ENCODE measurements at regions of chr9 and their contacts with region 1.

Region 1: GRCh38 chr9:21317956-21318923 is 13.1 kb upstream of the IFNA5 start:
- DNase-seq: peak in 1 of 2 experiments; percentile 17
- H3K4me3 ChIP-seq: no peak overlapping the region
- H3K27ac ChIP-seq: no peak overlapping the region
- H3K4me1 ChIP-seq: no peaks in the 10 kb centered on the region
- H3K27me3 ChIP-seq: no peaks in the 10 kb centered on the region
- CTCF ChIP-seq: peak; percentile 66

Region 2: DNA sequence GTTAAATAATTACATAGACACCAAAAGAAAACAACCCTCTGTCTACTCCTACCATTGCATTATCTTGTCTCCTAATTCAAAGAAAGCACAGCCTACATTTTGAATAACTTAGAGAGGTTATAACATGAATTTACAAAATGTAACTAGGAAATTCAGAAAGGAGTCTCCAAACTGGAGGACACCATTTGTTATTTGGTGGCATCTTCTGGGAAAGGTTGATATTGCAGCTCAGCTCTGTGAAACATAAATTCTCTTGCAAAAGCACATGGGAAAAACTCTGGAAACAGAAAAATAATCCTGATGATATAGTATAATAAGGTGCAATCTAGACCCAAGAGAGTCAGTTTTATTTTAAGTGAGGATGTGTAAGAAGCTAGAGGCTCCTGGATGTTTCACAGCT is 911.2 kb before region 1 on chr9:
- CTCF ChIA-PET with region 1: no interaction called
- POLR2A ChIA-PET with region 1: no interaction called
- intact Hi-C with region 1: no loop called
- DNase-seq: no peak
- H3K4me3 ChIP-seq: no peak overlapping the region
- H3K27ac ChIP-seq: no peak overlapping the region
- H3K4me1 ChIP-seq: no peaks in the 10 kb centered on the region
- H3K27me3 ChIP-seq: no peaks in the 10 kb centered on the region
- CTCF ChIP-seq: no peak

Region 3: GRCh38 chr9:21252721-21253547 is 65.3 kb before region 1 on chr9:
- CTCF ChIA-PET with region 1: no interaction called
- POLR2A ChIA-PET with region 1: no interaction called
- intact Hi-C with region 1: loop called (anchors 5 kb)
- DNase-seq: peak in 1 of 2 experiments; percentile 5
- H3K4me3 ChIP-seq: no peak overlapping the region
- H3K27ac ChIP-seq: no peak overlapping the region
- H3K4me1 ChIP-seq: no peaks in the 10 kb centered on the region
- H3K27me3 ChIP-seq: no peaks in the 10 kb centered on the region
- CTCF ChIP-seq: peak; percentile 74

Region 4: GRCh38 chr9:21334701-21335632 is 16.7 kb after region 1 on chr9 and contains the start of gene KLHL9:
- CTCF ChIA-PET with region 1: no interaction called
- POLR2A ChIA-PET with region 1: no interaction called
- intact Hi-C with region 1: no loop called
- DNase-seq: peak; percentile 65 to 81
- H3K4me3 ChIP-seq: peak within 1 kb of the TSS; percentile 92
- H3K27ac ChIP-seq: peak within 1 kb of the TSS; percentile 94
- H3K4me1 ChIP-seq: peaks cover 20% of the 10 kb centered on the region; the same call in 1 of the 2 replicates
- H3K27me3 ChIP-seq: no peaks in the 10 kb centered on the region
- CTCF ChIP-seq: no peak
- total RNA-seq, gene KLHL9: 9.1 and 10.5 TPM in 2 replicates

Region 5: GRCh38 chr9:21465859-21466518 is 147.7 kb after region 1 on chr9:
- CTCF ChIA-PET with region 1: interaction called, 12 read pairs
- POLR2A ChIA-PET with region 1: no interaction called
- intact Hi-C with region 1: no loop called
- DNase-seq: peak; percentile 4 to 51
- H3K4me3 ChIP-seq: no peak overlapping the region
- H3K27ac ChIP-seq: no peak overlapping the region
- H3K4me1 ChIP-seq: no peaks in the 10 kb centered on the region
- H3K27me3 ChIP-seq: no peaks in the 10 kb centered on the region
- CTCF ChIP-seq: peak; percentile 71